Posterior vena cava (tissue), 2 donors: ENCODE measurements at regions of chr11 and their contacts with region 1.

Region 1: DNA sequence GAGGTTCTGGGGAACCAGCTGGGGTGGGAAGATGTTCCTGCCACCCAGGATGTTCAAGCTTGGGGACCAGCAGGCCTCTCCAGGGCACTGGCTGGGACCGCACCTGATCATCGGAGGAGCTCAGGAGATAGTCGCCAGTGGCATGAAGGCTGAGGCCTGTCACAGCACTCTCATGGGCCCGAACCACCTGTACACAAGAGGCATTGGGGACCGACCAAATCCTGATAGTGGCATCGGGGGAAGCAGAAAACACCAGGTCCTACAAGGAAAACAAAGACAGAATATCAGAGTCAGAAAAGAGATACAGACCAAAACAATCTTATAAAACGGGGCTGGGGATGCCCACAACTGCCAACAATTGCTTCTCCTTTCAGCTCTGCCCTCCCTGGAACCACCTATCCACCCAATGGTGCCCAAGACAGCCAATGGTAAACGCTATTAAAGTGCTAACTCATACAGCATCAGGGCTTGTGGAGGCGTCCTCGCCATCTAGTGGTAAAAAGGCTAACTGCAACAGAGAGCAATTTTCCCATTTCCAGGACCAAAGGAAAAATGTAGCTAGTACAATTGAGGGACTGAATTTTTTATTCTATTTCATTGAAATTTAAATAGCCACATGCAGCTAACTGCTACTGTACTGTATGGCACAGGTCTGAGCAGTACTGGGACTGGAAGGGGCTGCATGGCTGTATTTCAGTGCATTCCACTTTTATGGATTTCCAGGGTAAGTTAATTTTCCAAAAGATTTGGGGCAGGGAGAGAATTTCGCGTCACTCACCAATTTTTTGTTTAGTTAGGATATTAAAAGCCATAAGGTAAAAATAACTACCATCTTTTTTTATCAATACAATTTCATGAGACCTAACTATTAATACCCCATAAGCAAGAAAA is 7.1 kb downstream of the PRPF19 start:
- DNase-seq: no peak

Region 2: GRCh38 chr11:60831143-60831500 is 68.2 kb before region 1 on chr11:
- intact Hi-C with region 1: loop called (anchors 5 kb)
- DNase-seq: peak; percentile 94

Region 3: GRCh38 chr11:60838132-60838531 is 61.2 kb before region 1 on chr11:
- intact Hi-C with region 1: loop called (anchors 5 kb)
- DNase-seq: no peak